CD4-positive, alpha-beta T cell (primary cell): ENCODE measurements at regions of chr14 and their contacts with region 1.

Region 1: DNA sequence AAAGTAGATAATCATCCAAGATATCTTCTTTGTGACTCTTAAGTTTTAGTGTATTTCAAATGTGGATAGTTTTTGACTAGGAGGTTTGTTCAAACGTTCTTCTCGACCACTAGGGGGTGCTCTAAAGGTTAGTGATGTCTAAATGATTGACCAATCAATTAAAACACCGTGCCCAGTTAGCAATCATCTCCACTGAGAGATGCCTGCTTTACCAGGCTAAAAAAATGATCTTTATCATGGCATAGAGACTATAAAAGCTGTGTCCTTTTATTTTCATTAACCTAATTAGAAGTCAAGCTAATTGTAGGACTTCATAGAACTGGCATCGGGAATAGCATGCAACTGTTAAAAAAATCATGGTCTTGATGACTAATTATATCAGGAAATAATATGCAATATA is 153.9 kb downstream of the PRKCH start:
- DNase-seq: peak in 3 of 14 experiments; percentile 71 to 80 (median 76)
- ATAC-seq: no peak
- H3K4me3 ChIP-seq: no peak overlapping the region
- H3K4me3 Mint-ChIP-seq: peak overlapping the region; percentile 5
- H3K27ac ChIP-seq: peak overlapping the region; percentile 95 to 97
- H3K27ac Mint-ChIP-seq: peak overlapping the region; percentile 84
- H3K4me1 ChIP-seq: peaks cover 86% of the 10 kb centered on the region
- H3K4me1 Mint-ChIP-seq: peaks cover 96% of the 10 kb centered on the region
- H3K27me3 ChIP-seq: no peaks in the 10 kb centered on the region
- H3K27me3 Mint-ChIP-seq: no peaks in the 10 kb centered on the region
- CTCF ChIP-seq: peak; percentile 71

Region 2: DNA sequence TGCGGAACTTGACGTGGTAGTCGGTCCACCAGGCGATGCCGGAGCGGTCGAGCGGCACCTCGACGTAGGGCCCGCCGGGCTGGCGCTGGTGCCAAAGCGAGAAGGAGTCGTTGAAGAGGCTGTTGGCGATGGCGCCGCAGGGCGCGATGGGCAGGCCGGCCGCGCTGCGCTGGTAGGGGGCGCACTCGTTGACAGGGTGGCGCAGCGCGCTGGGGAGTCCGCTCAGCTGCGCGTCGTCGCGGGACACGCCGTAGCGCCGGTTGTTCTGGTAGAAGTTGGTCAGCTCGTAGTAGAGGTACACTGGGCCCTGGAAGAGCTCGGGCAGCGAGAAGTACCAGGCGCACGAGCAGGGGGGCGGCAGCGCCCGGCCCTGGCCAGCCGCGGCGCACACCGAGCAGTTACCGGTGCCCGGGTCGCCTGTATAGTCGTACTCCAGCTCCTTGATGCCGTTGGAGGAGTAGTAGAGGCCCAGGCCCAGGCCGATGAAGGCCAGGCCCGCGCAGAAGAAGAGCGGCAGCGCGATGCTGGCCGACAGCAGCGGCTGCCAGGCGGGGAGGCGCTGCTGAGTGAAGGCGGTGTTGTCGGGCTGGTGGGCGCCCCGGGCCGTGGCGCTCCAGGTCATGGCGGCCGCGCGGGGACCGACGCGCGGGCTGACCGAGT is 194.7 kb before region 1 on chr14:
- CTCF ChIA-PET with region 1: interaction called, 3 read pairs
- POLR2A ChIA-PET with region 1: interaction called, 11 read pairs
- intact Hi-C with region 1: no loop called
- DNase-seq: peak; percentile 53 to 91 (median 80)
- ATAC-seq: peak; percentile 84
- H3K4me3 ChIP-seq: peak overlapping the region; percentile 63
- H3K4me3 Mint-ChIP-seq: peak overlapping the region; percentile 96
- H3K27ac ChIP-seq: peak overlapping the region in 1 of 2 donors; percentile 60
- H3K27ac Mint-ChIP-seq: peak overlapping the region; percentile 94
- H3K4me1 ChIP-seq: peaks cover 24% of the 10 kb centered on the region
- H3K4me1 Mint-ChIP-seq: peaks cover 28% of the 10 kb centered on the region
- H3K27me3 ChIP-seq: no peaks in the 10 kb centered on the region
- H3K27me3 Mint-ChIP-seq: no peaks in the 10 kb centered on the region
- CTCF ChIP-seq: peak; percentile 74

Region 3: DNA sequence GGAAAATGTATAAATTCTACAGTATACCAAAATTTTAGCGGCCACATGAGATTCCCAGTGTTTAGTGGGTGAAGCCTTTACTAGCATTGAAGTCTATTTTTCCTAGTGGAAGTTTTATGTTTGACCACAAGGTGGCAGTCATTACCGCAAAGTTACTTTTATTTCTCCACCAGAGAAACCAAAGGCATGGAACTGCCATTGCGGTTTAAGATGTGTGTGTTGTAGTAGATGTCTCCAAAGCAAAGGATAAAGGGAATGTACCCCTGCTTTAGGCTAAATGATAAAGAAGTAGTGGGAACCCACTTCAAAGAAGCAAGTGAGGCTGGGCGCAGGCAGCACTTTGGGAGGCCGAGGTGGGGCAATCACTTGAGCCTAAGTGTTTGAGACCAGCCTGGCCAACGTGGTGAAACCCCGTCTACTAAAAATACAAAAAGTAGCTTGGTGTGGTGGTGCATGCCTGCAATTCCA is 13.5 kb before region 1 on chr14:
- CTCF ChIA-PET with region 1: interaction called, 13 read pairs
- POLR2A ChIA-PET with region 1: interaction called, 3 read pairs
- intact Hi-C with region 1: loop called in 1 of 2 experiments (anchors 1 kb)
- DNase-seq: peak in 5 of 14 experiments; percentile 31 to 82 (median 76)
- ATAC-seq: peak; percentile 67
- H3K4me3 ChIP-seq: no peak overlapping the region
- H3K4me3 Mint-ChIP-seq: peak overlapping the region; percentile 2
- H3K27ac ChIP-seq: peak overlapping the region in 1 of 2 donors; percentile 10
- H3K27ac Mint-ChIP-seq: peak overlapping the region; percentile 73
- H3K4me1 ChIP-seq: peaks cover 40% of the 10 kb centered on the region
- H3K4me1 Mint-ChIP-seq: peaks cover 75% of the 10 kb centered on the region
- H3K27me3 ChIP-seq: no peaks in the 10 kb centered on the region
- H3K27me3 Mint-ChIP-seq: no peaks in the 10 kb centered on the region
- CTCF ChIP-seq: peak; percentile 80

Region 4: DNA sequence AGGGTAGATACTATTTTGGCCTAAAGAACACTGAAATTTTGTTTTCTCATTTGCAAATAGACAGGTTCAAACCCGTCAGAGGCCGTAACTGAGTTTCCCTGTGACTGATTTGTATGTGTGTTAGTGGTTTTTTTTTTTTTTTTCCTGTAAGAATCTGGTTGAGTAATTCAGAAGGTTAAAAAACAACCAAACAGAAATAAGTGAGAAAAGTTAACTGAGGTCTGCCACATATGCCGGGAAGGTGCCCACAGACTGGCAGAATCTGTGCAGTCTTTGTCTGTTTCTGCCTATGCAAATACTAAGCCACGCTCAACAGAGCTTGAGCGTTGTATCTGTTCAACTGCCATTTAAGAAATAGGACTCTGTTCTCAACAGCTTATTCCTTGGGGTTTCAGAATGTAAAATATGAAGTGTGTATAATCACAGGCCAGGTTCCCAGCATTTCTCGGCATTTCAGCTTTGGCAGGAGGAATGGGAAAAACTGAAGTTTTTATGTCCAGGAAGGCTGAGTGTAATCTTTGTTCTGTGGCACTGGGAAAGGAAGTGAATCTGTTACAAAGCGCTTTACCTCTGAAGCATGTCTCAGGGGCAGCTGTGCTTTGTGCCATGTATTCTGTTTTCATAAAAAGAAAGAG is 28.0 kb after region 1 on chr14:
- CTCF ChIA-PET with region 1: interaction called, 11 read pairs
- POLR2A ChIA-PET with region 1: interaction called, 124 read pairs
- intact Hi-C with region 1: loop called (anchors 1 to 2 kb)
- DNase-seq: peak; percentile 37 to 82 (median 58)
- ATAC-seq: peak; percentile 86
- H3K4me3 ChIP-seq: no peak overlapping the region
- H3K4me3 Mint-ChIP-seq: peak overlapping the region; percentile 77
- H3K27ac ChIP-seq: peak overlapping the region; percentile 64 to 69
- H3K27ac Mint-ChIP-seq: no peak overlapping the region
- H3K4me1 ChIP-seq: peaks cover 73% of the 10 kb centered on the region
- H3K4me1 Mint-ChIP-seq: peaks cover 96% of the 10 kb centered on the region
- H3K27me3 ChIP-seq: no peaks in the 10 kb centered on the region
- H3K27me3 Mint-ChIP-seq: no peaks in the 10 kb centered on the region
- CTCF ChIP-seq: no peak

Region 5: DNA sequence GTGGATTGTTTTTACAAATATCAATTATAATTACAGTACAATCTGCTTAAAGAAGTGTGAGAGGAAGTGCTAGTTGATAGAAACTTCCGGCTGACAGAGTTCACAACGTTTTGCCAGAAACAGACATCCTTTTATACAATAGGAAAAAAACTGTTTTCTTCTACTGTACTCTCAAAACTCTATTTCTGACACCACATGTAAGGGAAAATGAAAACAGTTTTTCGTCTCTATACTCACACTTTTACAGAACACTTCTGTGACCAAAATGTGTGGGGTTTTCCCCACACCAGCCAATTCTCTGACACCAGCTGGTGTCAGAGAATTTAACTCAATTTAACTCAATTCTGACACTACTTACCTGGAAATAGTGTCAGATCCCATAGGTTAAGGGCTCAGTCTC is 195.8 kb after region 1 on chr14:
- CTCF ChIA-PET with region 1: no interaction called
- POLR2A ChIA-PET with region 1: interaction called, 7 read pairs
- intact Hi-C with region 1: loop called in 1 of 2 experiments (anchors 5 kb)
- DNase-seq: peak in 9 of 14 experiments; percentile 5 to 87 (median 27)
- ATAC-seq: peak; percentile 93
- H3K4me3 ChIP-seq: peak overlapping the region; percentile 22
- H3K4me3 Mint-ChIP-seq: no peak overlapping the region
- H3K27ac ChIP-seq: peak overlapping the region; percentile 81 to 96
- H3K27ac Mint-ChIP-seq: no peak overlapping the region
- H3K4me1 ChIP-seq: peaks cover 63% of the 10 kb centered on the region
- H3K4me1 Mint-ChIP-seq: peaks cover 24% of the 10 kb centered on the region
- H3K27me3 ChIP-seq: no peaks in the 10 kb centered on the region
- H3K27me3 Mint-ChIP-seq: no peaks in the 10 kb centered on the region
- CTCF ChIP-seq: no peak